ENCODE measurements at regions of chr3 and their contacts with region 1.

Region 1: DNA sequence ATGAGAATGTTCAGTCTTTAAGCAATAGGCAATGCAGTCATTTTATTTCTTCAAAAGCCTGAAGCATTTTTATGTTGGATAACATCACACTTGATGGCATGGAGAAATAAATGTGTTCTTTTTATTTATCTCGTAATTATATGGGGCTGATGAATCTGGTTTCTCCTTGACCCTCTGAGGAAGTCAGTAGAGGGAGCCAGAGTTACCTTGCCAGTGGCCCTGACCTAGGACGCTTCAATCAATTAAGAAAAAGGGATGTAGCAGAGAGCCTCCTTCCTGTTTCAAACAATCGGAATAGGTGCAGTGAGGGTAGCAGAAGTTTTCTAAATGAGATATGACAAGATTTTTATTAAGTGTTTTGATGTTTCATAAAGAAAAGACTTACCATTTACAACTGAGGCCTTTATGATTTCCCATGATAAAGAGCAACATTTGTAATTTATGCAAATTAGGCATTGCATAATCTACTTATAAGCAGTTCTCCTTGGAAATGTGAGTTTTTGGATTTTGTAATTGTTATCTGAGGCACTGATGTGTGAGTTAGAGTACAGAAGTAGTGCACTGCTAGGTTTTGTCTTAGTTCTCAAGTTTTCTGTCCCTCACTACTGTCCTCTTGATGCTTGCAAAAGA is 129.1 kb downstream of the RAP2B start:
- DNase-seq: peak in 1 of 3 donors; percentile 37
- ATAC-seq: peak; percentile 54
- H3K4me3 ChIP-seq: no peak overlapping the region
- H3K4me1 ChIP-seq: no peaks in the 10 kb centered on the region
- CTCF ChIP-seq: no peak

Region 2: DNA sequence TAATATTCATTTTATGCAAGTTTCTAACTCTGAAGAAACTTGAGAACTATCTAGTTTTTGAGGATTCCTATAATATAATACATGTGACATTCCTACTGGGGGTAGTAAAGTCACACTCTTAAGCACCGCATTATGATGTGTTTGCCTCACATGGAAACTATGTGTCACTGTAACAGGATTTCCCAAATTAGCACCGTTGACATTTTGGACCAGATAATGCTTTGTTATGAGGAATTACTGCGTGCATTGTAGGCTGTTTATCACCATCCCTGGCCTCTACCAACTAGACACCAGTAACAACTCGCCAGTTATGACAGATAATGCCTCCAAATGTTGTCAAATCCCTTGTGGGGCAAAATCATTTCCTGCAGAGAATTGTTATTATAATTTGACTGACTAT is 138.7 kb after region 1 on chr3:
- intact Hi-C with region 1: no loop called
- DNase-seq: no peak
- ATAC-seq: no peak
- H3K4me3 ChIP-seq: no peak overlapping the region
- H3K4me1 ChIP-seq: no peaks in the 10 kb centered on the region
- CTCF ChIP-seq: no peak

Region 3: GRCh38 chr3:153442386-153442785 is 151.2 kb after region 1 on chr3:
- intact Hi-C with region 1: no loop called
- DNase-seq: no peak
- ATAC-seq: no peak
- H3K4me3 ChIP-seq: no peak overlapping the region
- H3K4me1 ChIP-seq: no peaks in the 10 kb centered on the region
- CTCF ChIP-seq: no peak

Region 4: DNA sequence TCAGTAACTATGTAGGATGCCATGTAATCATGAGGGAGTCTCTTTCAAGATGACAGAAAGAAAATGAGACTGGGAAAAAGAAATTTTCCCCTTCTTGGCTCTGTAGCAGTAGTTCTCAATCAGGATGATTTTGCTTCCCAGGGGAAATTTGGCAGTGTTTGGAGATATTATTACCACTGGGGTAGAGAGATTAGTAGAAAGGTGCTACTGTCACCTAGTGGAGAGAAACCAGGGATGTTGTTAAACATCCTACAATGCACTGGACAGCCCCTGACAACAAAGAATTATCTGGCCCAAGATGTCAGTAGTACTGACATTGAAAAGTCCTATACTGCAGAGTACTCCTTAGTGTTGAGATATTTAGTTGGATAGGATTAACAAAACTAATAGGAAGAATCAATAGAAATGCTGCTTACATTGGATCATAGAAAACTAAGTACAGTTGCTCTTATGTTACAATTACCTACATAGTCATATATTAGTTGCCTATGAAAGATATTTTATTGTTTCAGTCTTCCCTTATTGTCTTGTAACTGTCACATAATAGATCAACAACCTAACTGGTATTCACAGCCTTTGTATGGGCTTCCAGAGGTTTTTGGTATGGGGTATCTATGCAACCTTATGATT is 304.1 kb after region 1 on chr3:
- intact Hi-C with region 1: loop called in 1 of 2 experiments (anchors 2 kb)
- DNase-seq: peak in 1 of 3 donors; percentile 12
- ATAC-seq: peak; percentile 46
- H3K4me3 ChIP-seq: no peak overlapping the region
- H3K4me1 ChIP-seq: no peaks in the 10 kb centered on the region
- CTCF ChIP-seq: peak; percentile 18

Measured in mucosa of descending colon (tissue), 3 donors.